KBM-7 (cell line): ENCODE measurements at regions of chr5 and their contacts with region 1.

Region 1: GRCh38 chr5:131165119-131165727 is at the start of gene HINT1:
- DNase-seq: peak; percentile 93

Region 2: DNA sequence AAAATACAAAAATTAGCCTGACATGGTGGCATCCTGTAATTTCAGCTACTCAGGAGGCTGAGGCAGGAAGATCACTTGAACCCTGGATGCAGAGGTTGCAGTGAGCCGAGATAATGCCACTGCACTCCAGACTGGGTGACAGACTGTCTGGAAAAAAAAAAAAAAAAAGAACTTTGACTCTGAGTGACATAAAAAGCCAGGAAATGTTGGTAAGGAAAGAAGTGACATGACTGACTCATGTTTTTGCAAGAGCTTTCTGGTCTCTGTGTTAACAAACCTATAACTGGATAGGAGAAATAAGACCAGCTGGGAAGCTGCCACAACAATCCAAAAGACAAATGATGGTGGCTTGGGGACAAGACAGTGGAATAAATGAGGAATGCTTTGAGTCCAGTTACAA is 272.2 kb before region 1 on chr5:
- in situ Hi-C with region 1: no loop called
- DNase-seq: no peak

Region 3: DNA sequence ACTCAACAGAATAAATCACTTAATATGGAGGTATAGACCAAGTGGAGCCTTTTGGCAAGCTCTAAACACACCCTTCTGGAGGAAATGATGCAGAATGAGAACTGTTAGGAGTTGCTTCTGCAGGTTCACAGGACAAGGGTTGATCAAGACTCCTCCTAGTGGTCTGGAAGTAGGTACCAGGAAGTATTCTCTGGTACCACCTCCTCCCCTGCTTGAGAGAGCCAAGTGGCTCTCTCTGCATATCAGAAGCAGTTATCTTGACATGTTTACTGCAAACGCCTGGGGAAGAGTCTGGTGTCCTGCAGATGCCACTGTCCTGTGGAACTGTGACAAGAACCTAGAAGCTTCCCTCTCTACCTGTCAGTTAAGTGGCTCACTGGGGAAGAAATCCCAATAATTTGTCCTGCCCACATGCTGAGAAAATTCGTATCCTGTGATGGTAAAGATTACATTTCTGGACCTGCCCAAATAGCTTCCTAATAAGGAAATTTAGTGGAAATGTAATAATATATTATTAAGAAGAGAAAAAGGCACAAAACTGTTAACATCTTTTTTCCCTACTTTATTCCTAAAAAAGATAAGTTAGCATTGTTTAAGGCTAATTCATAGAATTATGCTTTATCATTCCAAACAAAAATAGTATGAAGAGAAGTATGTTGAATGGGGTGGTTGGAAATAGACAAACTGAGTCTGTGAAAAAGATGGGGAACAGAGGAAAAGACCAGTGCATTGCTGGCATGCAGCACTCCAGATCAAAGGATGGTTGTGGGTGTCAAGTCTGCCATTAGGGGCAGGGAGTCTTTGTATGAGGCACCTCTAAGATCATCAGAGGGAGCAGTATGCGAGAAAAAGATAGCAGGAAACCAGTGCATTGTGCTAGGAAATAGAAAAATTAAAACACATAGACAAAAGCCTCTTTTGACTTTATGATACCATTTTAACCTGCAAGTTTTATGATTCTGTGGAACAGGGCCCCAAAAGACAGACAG is 217.5 kb after region 1 on chr5:
- in situ Hi-C with region 1: loop called (anchors 25 kb)
- DNase-seq: peak; percentile 84